Adrenal gland (tissue), 19 donors: ENCODE measurements at regions of chr19 and their contacts with region 1.

Region 1: GRCh38 chr19:34336781-34337271 is 28.2 kb upstream of the GPI start:
- DNase-seq: peak in 2 of 7 donors; percentile 45
- H3K4me3 ChIP-seq: no peak overlapping the region
- H3K27ac ChIP-seq: peak overlapping the region in 4 of 5 donors; percentile 13 to 81 (median 44)
- H3K4me1 ChIP-seq: peaks cover 7 to 24% of the 10 kb centered on the region in 2 donors
- H3K27me3 ChIP-seq: no peaks in the 10 kb centered on the region
- CTCF ChIP-seq: peak; percentile 51 to 76 (median 70)
- POLR2A ChIP-seq: no peak

Region 2: GRCh38 chr19:34104096-34104495 is 232.7 kb before region 1 on chr19:
- intact Hi-C with region 1: no loop called
- DNase-seq: no peak
- H3K4me3 ChIP-seq: no peak overlapping the region
- H3K27ac ChIP-seq: no peak overlapping the region
- H3K4me1 ChIP-seq: no peaks in the 10 kb centered on the region
- H3K27me3 ChIP-seq: no peaks in the 10 kb centered on the region
- CTCF ChIP-seq: no peak
- POLR2A ChIP-seq: no peak

Region 3: GRCh38 chr19:34253699-34254551 is 82.9 kb before region 1 on chr19:
- intact Hi-C with region 1: loop called in 1 of 2 experiments (anchors 10 kb)
- DNase-seq: peak in 5 of 7 donors; percentile 76 to 91 (median 89)
- H3K4me3 ChIP-seq: peak overlapping the region; percentile 37 to 98 (median 76)
- H3K27ac ChIP-seq: peak overlapping the region in 4 of 5 donors; percentile 79 to 94 (median 86)
- H3K4me1 ChIP-seq: peaks cover 12 to 31% of the 10 kb centered on the region in 2 donors
- H3K27me3 ChIP-seq: no peaks in the 10 kb centered on the region
- CTCF ChIP-seq: no peak
- POLR2A ChIP-seq: peak; percentile 70

Region 4: DNA sequence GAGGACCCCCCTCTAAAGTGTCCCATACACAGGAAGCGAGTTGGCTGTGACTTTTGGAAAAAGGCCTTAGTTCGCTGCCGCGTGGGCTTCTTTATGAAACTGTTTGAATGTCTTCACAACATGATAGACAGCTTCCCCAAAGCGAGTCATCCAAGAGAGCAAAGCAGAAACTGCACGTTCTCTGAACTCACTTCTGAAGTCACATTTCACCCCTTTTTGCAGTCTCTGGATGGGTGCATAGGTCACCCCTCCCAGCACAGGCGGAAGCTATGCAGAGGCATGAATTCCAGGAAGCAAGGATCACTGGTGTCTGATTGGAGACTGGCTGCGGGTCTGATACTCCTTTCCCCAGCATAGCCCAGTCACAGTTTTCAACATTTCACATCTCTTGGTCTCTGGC is 38.8 kb after region 1 on chr19:
- intact Hi-C with region 1: no loop called
- DNase-seq: peak in 2 of 7 donors; percentile 34 to 36
- H3K4me3 ChIP-seq: no peak overlapping the region
- H3K27ac ChIP-seq: peak overlapping the region in 2 of 5 donors; percentile 65 to 79
- H3K4me1 ChIP-seq: peaks cover 4 to 17% of the 10 kb centered on the region in 2 donors
- H3K27me3 ChIP-seq: no peaks in the 10 kb centered on the region
- CTCF ChIP-seq: no peak
- POLR2A ChIP-seq: no peak

Region 5: DNA sequence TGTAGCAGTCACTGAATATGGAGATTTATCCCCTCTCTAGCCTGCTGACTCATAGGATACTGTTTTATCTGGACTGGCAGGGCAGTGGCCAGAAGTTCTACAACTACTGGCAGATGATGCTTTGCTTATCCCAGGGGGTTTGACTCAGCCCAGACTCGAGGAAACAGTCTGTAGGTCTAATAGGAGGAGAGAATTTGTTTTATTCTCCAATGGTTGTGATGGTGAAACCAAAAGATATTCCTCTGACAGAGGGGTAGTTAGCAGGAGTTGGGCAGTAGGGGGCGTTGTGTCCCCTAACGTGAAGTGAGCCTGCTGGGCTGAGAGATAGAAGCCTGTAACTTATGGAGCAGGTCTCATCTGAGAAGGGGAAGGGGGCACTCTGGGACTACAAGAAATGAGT is 219.7 kb after region 1 on chr19:
- intact Hi-C with region 1: no loop called
- DNase-seq: peak in 1 of 7 donors; percentile 33
- H3K4me3 ChIP-seq: no peak overlapping the region
- H3K27ac ChIP-seq: no peak overlapping the region
- H3K4me1 ChIP-seq: no peaks in the 10 kb centered on the region
- H3K27me3 ChIP-seq: no peaks in the 10 kb centered on the region
- CTCF ChIP-seq: peak in 4 of 6 experiments; percentile 7 to 36 (median 26)
- POLR2A ChIP-seq: no peak